ENCODE measurements at regions of chr17 and their contacts with region 1.

Region 1: GRCh38 chr17:37494971-37495370 is 5.3 kb downstream of the DUSP14 start:
- DNase-seq: no peak
- ATAC-seq: no peak
- H3K4me3 ChIP-seq: no peak overlapping the region
- H3K27ac ChIP-seq: no peak overlapping the region
- H3K4me1 ChIP-seq: peaks cover 0 to 2% (median 0%) of the 10 kb centered on the region in 3 donors
- H3K27me3 ChIP-seq: no peaks in the 10 kb centered on the region
- CTCF ChIP-seq: no peak

Region 2: DNA sequence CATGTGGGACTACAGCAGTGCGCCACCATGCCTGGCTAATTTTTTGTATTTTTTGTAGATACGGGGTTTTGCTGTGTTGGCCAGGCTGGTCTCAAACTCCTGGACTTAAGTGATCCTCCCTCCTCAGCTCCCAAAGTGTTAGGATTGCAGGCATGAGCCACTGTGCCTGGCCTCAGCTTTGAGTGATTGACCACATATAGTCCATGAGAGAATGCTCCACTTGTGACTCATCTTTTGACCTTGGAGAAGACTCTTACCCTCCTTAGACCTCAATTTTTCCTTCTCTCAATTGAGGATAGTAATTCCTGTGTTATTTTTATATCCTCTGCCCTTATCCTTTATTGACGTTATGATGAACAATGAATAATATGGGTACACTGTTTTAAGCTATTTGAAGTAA is 36.2 kb before region 1 on chr17:
- intact Hi-C with region 1: loop called in 1 of 3 experiments (anchors 5 kb)
- DNase-seq: no peak
- ATAC-seq: no peak
- H3K4me3 ChIP-seq: no peak overlapping the region
- H3K27ac ChIP-seq: no peak overlapping the region
- H3K4me1 ChIP-seq: no peaks in the 10 kb centered on the region
- H3K27me3 ChIP-seq: no peaks in the 10 kb centered on the region
- CTCF ChIP-seq: no peak

Region 3: GRCh38 chr17:37609170-37610040 is 114.4 kb after region 1 on chr17 and contains the start of gene SYNRG:
- intact Hi-C with region 1: no loop called
- DNase-seq: peak; percentile 93 to 97 (median 94)
- ATAC-seq: peak; percentile 97 to 99 (median 98)
- H3K4me3 ChIP-seq: peak within 1 kb of the TSS; percentile 62 to 99 (median 91)
- H3K27ac ChIP-seq: peak within 1 kb of the TSS; percentile 46 to 91 (median 81)
- H3K4me1 ChIP-seq: peaks cover 0 to 24% (median 0%) of the 10 kb centered on the region in 3 donors
- H3K27me3 ChIP-seq: no peaks in the 10 kb centered on the region
- CTCF ChIP-seq: no peak
- total RNA-seq, gene SYNRG: 14.1 to 26.0 (median 18.4) TPM

Measured in pancreas (tissue), 10 donors.